Right ventricle myocardium inferior (tissue), 1 donor: ENCODE measurements at regions of chr6 and their contacts with region 1.

Region 1: DNA sequence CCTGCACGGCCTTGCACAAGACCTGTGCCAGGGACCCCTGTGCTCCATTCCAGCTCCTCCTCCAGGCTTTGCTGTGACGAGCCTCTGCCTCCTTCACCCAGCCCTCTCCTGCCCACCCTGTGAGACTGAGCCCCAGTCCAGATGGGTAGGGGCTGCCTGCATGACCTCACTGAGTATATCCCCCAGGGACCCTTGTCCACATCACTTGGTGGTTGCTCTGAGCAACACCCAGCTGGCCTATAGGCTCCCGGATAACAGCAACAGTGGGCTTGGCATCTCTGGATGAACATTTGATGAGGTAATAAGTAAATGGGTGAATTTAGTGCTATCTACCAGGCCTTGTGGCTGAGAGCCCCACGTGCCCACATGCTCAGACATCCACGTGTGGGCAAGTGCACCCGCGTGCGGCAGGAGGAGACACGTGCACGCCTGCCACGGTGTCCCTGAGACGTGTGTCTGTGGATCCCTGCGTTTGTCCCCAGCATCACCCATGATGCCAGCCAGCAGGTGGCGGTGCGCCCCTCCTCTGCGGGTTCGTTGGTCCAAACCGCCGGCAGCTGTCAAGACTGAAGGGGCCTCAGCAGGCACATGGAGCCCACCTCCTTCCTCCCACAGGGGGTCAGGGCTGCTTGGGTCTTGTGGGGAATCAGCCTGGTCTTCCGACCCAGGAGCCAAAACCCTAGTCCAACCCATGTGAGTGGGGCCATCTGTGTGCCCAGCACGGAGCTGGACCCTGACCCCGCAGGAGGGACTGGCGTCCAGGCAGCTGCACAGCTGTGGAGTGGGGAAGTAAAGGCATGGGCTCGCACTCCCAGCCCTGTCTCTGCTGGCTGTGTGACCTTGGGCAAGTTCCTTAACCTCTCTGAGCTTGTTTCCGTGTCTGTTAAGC is 45.9 kb downstream of the FGD2 start:
- DNase-seq: peak; percentile 96
- ATAC-seq: peak; percentile 75

Region 2: DNA sequence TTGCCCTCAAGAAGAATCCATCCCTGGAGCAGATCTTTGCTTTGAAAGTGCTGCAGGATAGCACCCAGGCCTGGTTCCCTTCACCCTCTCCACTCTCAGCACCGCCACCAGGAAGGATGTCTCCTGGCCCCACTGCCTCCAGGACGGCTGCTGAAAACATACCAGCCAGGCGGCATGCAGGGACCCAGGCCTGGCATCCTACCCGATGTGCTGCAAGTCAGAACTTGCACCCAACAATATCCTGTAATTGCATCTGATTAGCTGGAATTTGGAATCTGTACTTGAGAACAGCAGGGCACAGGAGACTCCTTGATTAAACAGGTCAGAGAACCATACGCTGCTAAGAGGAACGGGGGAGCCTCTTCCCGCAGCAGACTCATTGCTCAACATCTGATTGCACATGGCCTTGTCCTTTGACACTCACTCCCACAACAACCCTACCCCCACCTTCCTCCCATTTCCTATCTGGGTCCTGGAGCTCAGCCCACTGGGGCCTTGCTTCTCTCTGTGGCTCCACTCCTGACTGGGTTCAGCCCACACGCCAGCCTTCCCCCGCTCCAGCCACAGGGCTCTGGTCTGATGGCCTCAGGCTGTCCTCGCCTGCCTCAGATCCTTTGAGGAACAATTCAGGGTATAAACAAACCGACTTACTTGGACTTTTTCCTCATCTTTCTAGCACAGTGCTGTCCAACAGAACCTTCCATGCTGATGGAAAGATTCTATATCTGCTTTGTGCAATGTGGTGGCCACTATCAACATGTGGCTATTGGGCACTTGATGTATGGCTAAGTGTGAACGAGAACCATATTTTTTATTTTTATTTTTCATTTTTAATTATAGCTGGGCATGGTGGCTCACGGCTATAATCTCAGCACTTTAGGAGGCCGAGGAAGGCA is 32.1 kb after region 1 on chr6:
- intact Hi-C with region 1: no loop called
- DNase-seq: peak; percentile 91
- ATAC-seq: peak; percentile 95

Region 3: GRCh38 chr6:37102279-37103168 is 51.1 kb after region 1 on chr6:
- intact Hi-C with region 1: loop called (anchors 2 kb)
- DNase-seq: peak; percentile 92
- ATAC-seq: peak; percentile 94

Region 4: GRCh38 chr6:37131104-37131959 is 80.0 kb after region 1 on chr6:
- intact Hi-C with region 1: loop called (anchors 2 kb)
- DNase-seq: peak; percentile 78
- ATAC-seq: peak; percentile 78